Activated naive CD4-positive, alpha-beta T cell treated with anti-CD3 and anti-CD28 coated beads for 36 hours (primary cell): ENCODE measurements at regions of chr15 and their contacts with region 1.

Region 1: DNA sequence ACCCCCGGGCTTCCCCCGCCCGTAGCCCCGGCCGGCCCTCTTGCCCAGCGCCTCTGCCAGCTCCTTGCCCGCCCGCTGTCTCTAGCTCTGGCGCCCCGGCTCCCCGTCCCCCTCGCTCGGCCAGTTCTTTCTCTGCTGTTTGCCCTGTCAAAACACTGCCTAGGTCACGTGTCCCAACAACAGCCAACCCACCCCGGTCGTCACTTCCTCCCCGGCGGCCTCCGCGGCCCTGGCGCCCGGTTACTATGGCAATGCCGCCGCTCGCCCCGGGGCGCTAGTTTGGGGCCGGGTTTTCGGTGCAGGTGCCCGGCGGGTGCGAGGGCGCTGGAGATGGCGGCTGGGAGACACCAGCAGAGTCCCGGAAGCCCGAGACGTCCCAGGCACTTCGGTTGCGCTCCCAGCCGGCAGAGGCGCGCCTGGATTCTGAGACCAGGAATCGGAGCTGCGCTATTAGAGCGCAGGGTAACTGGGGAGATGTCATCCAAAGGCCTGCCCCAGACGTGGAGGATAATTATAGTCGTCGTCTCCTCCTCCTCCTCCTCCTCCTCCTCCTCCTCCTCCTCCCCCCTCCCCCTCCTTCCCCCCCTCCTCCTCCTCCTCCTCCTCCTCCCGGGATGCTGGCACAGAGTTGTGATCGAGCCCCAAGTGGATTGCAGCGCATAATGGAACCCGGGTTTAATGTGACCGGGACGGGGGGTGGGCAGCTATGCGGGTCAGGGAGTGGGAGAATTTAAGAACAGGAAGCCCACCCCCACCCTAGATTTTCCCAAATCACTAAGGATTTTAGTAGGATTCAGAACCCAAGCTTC is at the start of gene ATOSA:
- DNase-seq: peak; percentile 93
- H3K4me3 Mint-ChIP-seq: peak within 1 kb of the TSS; percentile 100
- H3K27ac Mint-ChIP-seq: peak within 1 kb of the TSS; percentile 98
- H3K4me1 Mint-ChIP-seq: peaks cover 39% of the 10 kb centered on the region
- H3K27me3 Mint-ChIP-seq: no peaks in the 10 kb centered on the region
- total RNA-seq, gene ATOSA: 19.4 to 21.7 TPM

Region 2: GRCh38 chr15:52261498-52262242 is 417.8 kb before region 1 on chr15:
- CTCF ChIA-PET with region 1: interaction called, 10 read pairs
- intact Hi-C with region 1: loop called (anchors 2 kb)
- DNase-seq: peak; percentile 89
- H3K4me3 Mint-ChIP-seq: peak overlapping the region; percentile 13
- H3K27ac Mint-ChIP-seq: peak overlapping the region; percentile 74
- H3K4me1 Mint-ChIP-seq: peaks cover 34% of the 10 kb centered on the region
- H3K27me3 Mint-ChIP-seq: no peaks in the 10 kb centered on the region

Region 3: DNA sequence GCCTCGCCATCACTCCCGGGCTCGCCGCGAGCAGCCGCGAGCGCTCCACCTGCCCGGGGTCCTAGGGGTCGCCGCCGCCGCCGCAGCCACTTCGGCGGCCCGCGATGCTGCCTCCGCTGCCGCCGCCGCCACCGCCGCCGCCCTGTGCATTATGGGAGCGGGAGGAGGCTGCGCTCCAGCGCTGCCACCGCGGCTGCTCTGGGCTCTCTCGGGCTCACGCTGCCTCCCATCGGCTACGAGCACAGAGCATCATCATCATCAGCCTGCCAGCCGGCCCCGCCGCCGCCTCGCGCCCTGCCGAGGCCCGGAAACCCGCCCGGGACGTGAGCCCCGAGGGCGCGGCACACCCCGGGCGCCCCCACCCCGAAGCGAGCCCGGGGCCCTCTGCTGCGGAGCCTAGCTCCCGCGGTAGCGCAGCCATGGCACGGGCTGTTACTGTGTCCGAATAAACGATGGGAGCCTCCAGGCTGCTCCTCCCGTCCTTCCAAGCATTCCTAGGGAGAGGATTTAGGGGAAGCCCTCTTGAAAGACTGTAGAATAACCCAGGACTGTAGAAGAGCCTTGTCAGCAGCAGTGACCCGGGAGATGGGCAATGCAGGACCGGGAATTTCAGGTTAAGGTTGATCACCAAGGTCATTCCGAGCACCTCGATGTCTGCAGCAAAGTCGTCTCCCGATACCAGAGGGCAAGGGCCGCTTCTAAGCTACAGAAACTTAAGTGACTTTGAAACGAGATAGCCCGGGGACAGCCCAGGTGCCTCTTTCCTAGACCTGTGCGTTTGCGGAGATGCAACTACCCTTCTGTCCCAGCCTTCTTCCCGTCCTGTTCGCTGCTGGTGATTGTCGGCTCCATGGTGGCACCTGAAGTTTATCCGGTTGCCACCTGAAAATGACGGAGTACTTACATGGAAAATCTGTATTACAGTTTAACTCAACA is 150.2 kb before region 1 on chr15:
- CTCF ChIA-PET with region 1: no interaction called
- intact Hi-C with region 1: loop called (anchors 1 kb)
- DNase-seq: peak; percentile 81
- H3K4me3 Mint-ChIP-seq: peak overlapping the region; percentile 74
- H3K27ac Mint-ChIP-seq: peak overlapping the region; percentile 47
- H3K4me1 Mint-ChIP-seq: peaks cover 13% of the 10 kb centered on the region
- H3K27me3 Mint-ChIP-seq: no peaks in the 10 kb centered on the region

Region 4: DNA sequence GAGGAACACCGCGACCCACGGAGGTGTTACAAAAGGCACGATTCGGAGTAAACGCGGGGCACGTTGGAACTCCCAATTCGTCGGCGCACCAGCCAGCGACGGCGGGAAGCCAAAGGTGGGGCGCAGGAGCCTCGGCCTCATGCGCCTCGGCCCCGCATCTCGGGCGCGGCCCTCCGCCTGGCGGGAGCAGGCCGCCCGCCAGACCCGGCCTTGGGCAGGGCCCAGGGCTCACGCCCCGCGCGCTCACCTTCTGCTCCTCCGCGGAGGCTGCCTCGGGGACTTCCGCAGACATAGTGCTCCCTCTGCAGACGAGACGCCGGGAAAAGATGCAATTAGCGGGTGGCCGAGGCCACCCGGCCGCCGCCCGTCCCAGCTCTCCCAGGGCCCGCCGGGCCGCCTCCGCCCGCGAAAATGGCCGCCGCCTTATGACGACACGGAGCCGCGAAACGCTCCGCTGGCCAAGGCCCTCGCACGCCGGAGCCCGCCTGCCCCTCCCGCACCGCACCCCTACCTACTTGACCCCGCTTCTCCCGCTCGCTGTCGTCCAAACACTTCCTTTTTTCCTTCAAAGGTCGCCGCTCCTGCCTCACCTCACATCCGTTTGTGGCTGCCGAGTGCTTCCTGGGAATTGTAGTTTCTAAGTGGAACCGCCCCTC is 110.7 kb before region 1 on chr15 and contains the start of gene ARPP19:
- CTCF ChIA-PET with region 1: interaction called, 3 read pairs
- intact Hi-C with region 1: loop called (anchors 1 kb)
- DNase-seq: peak; percentile 90
- H3K4me3 Mint-ChIP-seq: peak within 1 kb of the TSS; percentile 86
- H3K27ac Mint-ChIP-seq: peak within 1 kb of the TSS; percentile 98
- H3K4me1 Mint-ChIP-seq: peaks cover 23% of the 10 kb centered on the region
- H3K27me3 Mint-ChIP-seq: no peaks in the 10 kb centered on the region
- total RNA-seq, gene ARPP19: 130 to 144 TPM

Region 5: GRCh38 chr15:52658955-52659354 is 20.5 kb before region 1 on chr15:
- CTCF ChIA-PET with region 1: interaction called, 3 read pairs
- intact Hi-C with region 1: loop called (anchors 1 kb)
- DNase-seq: peak; percentile 53
- H3K4me3 Mint-ChIP-seq: no peak overlapping the region
- H3K27ac Mint-ChIP-seq: no peak overlapping the region
- H3K4me1 Mint-ChIP-seq: peaks cover 24% of the 10 kb centered on the region
- H3K27me3 Mint-ChIP-seq: no peaks in the 10 kb centered on the region

Region 6: DNA sequence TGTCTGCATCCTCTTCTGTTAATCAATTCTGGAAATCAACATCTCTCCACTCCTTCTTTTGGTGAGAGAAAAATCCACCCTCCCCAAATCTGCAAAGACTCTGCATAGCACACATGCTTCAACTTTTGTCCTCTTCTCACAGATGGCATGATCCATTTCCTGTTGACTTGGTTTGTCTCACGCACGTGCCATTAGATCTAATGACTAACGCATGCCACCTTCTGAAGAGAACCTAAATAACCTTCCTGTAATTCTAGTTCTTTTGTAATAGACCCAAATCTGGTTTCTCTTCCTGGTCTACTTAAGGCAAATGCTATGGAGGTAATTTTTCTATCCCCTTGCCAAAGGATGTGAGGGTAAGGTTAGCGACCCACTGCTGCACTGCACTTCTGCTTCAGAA is 50.7 kb after region 1 on chr15:
- CTCF ChIA-PET with region 1: interaction called, 7 read pairs
- intact Hi-C with region 1: loop called (anchors 1 kb)
- DNase-seq: peak; percentile 73
- H3K4me3 Mint-ChIP-seq: no peak overlapping the region
- H3K27ac Mint-ChIP-seq: peak overlapping the region; percentile 57
- H3K4me1 Mint-ChIP-seq: peaks cover 38% of the 10 kb centered on the region
- H3K27me3 Mint-ChIP-seq: no peaks in the 10 kb centered on the region

Region 7: DNA sequence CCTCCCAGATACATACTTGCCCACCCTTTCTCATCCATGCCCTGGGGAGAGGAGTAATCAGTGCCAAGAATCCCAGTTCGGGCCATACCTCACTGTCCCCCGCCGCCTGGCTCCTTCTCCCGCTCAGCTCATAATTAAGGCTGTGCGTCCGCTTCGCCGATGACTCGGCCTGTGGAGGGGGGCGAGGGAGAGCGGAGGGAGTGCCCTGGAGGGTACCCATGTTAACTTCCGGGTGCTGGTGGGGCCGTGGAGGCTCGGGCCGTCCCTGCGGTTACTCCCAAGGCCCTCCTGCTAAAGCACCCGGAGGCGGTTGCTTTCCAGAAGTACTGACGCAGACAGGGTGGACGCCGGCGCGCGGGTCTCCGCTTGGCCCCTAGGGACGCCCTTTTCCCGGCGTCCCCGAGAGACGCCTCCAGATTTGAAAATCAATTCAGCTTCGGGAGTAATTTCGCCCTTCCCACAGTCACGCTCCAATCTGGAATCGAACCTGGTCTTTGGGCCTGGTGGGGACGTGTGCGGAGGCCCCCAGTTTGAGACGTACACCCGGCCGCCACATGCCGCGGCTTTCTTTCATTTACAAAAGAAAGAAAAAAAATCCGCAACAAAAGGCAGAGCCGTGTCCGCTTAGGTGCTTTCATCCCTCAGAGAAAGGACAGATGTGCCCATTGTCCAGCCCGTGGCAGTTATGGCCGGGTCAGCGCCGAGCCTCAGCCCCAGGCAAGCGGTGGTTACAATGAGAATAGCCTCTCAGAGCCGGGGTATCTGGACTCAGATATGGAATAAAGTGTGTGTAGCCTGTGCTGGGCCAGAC is 111.7 kb after region 1 on chr15:
- CTCF ChIA-PET with region 1: no interaction called
- intact Hi-C with region 1: no loop called
- DNase-seq: no peak
- H3K4me3 Mint-ChIP-seq: peak overlapping the region; percentile 54
- H3K27ac Mint-ChIP-seq: no peak overlapping the region
- H3K4me1 Mint-ChIP-seq: peaks cover 20% of the 10 kb centered on the region
- H3K27me3 Mint-ChIP-seq: peaks cover 82% of the 10 kb centered on the region